Esophagus squamous epithelium (tissue), 5 donors: ENCODE measurements at regions of chr11 and their contacts with region 1.

Region 1: GRCh38 chr11:74929431-74930363 is 19.2 kb downstream of the XRRA1 start:
- DNase-seq: peak; percentile 25
- H3K4me3 ChIP-seq: no peak overlapping the region
- H3K27ac ChIP-seq: no peak overlapping the region
- H3K4me1 ChIP-seq: no peaks in the 10 kb centered on the region
- H3K27me3 ChIP-seq: no peaks in the 10 kb centered on the region
- CTCF ChIP-seq: peak; percentile 59 to 88 (median 82)
- POLR2A ChIP-seq: no peak

Region 2: DNA sequence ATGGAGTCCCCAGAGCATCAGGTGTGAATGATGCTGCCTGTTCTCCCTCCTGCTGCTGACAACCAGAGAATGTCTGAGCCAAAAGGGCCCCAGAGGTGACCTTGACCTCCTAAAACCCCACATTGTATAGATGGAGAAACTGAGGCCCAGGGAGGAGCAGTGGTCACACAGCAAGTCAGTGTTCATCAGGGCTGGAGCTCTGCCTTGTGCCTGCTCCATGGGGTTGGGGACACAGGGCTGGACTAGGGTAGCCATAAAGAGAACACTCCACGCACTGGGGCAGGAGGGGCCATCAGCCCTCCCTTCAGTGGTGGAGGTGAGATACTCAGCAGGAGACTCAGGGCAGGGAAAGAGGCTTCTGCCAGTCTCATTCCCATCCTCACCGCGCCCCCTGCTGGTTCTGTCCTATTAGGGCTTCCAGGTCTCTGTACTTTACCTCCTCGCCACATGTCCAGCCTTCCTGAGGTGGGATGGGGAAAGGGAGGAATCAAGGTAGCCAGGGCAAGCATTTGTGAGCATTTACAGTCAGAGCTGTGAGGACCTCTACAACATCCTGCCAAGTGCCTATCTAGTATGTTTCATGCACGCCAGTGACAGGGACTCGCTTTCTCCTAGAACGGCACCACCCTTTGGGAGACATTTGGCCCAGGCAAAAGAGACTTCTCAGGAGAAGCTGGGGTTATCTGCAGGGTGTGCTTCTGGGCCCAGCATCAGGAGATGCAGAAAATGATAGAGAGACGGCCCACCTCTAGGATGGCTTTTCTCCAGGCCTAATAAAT is 102.3 kb after region 1 on chr11:
- intact Hi-C with region 1: loop called (anchors 5 kb)
- DNase-seq: no peak
- H3K4me3 ChIP-seq: no peak overlapping the region
- H3K27ac ChIP-seq: no peak overlapping the region
- H3K4me1 ChIP-seq: peaks cover 0 to 4% (median 0%) of the 10 kb centered on the region in 3 donors
- H3K27me3 ChIP-seq: peaks cover 0 to 5% (median 0%) of the 10 kb centered on the region in 4 donors
- CTCF ChIP-seq: peak; percentile 40 to 72 (median 57)
- POLR2A ChIP-seq: no peak

Region 3: DNA sequence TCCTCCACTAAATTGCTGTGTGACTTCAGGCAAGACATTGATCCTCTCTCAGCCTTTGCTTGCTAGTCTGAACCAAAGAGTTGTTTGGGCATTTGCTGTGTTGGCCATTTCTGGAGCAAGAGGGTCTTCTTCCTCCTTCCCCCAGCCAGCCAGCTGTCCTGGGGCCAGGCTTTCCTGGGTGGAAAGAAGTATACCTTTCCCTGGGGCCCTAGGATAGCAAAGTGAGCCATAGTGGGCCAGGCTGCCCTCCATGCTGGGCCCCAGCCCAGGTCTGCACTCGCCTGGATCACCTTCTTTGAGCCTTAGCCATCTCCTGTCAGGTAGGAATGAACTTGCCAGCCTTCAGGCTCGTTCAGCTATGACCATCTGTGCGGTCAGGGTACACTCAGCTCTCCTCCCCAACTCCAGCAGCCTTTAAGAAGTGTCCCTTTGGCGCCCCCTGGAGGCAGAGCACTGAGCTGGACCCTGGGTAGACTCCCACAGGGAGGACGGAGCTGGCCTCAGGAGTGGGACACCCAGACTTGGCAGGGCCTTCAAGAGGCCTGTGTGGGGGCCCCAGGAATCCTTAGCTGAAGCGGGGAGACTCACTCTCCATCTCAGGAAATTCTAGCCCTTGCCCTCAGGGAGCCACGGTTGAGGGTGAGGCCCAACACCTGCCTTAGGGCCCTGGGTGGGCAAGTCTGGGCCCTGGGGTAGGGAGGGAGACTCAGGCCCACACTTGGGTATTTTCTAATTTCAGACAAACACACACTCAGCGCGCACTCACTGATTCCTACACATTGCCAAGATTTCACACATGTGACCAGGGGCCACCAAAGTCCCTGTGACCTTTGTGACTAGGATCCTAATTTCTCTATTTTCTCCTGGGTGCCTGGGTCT is 275.2 kb after region 1 on chr11:
- intact Hi-C with region 1: loop called (anchors 10 kb)
- DNase-seq: no peak
- H3K4me3 ChIP-seq: no peak overlapping the region
- H3K27ac ChIP-seq: no peak overlapping the region
- H3K4me1 ChIP-seq: no peaks in the 10 kb centered on the region
- H3K27me3 ChIP-seq: peaks cover 0 to 22% (median 0%) of the 10 kb centered on the region in 4 donors
- CTCF ChIP-seq: peak; percentile 63 to 87 (median 84)
- POLR2A ChIP-seq: no peak

Region 4: DNA sequence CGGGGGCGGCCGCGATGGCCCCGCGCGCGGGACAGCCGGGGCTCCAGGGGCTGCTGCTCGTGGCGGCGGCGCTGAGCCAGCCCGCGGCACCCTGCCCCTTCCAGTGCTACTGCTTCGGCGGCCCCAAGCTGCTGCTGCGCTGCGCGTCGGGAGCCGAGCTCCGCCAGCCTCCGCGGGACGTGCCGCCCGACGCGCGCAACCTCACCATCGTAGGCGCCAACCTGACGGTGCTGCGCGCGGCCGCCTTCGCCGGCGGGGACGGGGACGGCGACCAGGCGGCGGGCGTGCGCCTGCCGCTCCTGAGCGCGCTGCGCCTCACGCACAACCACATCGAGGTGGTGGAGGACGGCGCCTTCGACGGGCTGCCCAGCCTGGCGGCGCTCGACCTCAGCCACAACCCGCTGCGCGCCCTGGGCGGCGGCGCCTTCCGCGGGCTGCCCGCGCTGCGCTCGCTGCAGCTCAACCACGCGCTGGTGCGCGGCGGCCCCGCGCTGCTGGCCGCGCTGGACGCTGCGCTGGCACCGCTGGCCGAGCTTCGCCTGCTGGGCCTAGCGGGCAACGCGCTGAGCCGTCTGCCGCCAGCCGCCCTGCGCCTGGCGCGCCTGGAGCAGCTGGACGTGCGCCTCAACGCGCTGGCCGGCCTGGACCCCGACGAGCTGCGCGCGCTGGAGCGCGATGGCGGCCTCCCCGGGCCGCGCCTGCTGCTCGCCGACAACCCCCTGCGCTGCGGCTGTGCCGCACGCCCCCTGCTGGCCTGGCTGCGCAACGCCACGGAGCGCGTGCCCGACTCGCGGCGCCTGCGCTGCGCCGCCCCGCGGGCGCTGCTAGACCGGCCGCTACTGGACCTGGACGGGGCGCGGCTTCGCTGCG is 311.6 kb after region 1 on chr11:
- intact Hi-C with region 1: loop called (anchors 10 kb)
- DNase-seq: no peak
- H3K4me3 ChIP-seq: peak overlapping the region; percentile 25 to 69 (median 46)
- H3K27ac ChIP-seq: no peak overlapping the region
- H3K4me1 ChIP-seq: peaks cover 5 to 24% (median 20%) of the 10 kb centered on the region in 3 donors
- H3K27me3 ChIP-seq: peaks cover 11 to 83% (median 16%) of the 10 kb centered on the region in 4 donors
- CTCF ChIP-seq: peak; percentile 39 to 99 (median 97)
- POLR2A ChIP-seq: no peak